GM12878 (cell line): ENCODE measurements at regions of chr3 and their contacts with region 1.

Region 1: DNA sequence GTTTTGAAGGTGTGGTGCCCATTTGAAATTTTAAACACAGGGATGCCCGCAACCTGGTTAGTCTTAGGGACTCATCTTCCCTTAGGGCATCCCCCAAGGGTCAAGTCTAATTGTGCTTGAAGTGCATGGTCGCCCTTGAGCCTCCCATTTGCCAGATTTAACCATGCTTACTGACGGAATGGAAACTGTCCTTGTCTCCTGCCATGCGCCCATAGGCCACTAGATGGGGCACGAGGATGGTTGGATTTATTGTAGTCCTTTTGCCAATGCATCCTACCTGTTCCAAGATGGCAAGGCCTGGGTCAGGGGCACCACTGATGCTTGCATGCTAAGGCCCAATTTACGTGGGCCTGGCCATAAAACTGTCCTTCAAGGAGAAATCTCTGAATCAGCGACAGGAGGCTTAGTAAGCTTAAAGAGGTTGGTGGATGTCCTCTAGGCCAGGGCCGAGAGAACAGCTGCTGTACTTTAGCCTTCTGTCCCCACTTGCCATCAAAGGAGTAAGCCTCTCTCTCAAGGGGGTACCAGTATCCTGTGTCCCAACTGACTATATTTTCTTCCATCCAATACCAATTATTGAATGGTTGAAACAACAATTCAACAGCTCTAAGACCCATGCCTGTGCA is 355.4 kb downstream of the OTOL1 start:
- DNase-seq: peak; percentile 8
- ATAC-seq: peak; percentile 90
- H3K4me3 ChIP-seq: no peak overlapping the region
- H3K27ac ChIP-seq: no peak overlapping the region
- H3K4me1 ChIP-seq: no peaks in the 10 kb centered on the region
- H3K27me3 ChIP-seq: no peaks in the 10 kb centered on the region
- CTCF ChIP-seq: peak; percentile 79 to 92 (median 81)
- EP300 ChIP-seq: no peak
- POLR2A ChIP-seq: no peak
- RAD21 ChIP-seq: peak; percentile 81

Region 2: GRCh38 chr3:161508863-161509477 is 343.1 kb before region 1 on chr3:
- CTCF ChIA-PET with region 1: interaction called, 3 read pairs
- POLR2A ChIA-PET with region 1: no interaction called
- RAD21 ChIA-PET with region 1: no interaction called
- SMC1A ChIA-PET with region 1: no interaction called
- in situ Hi-C with region 1: no loop called
- intact Hi-C with region 1: loop called (anchors 5 kb)
- DNase-seq: no peak
- ATAC-seq: peak; percentile 89
- H3K4me3 ChIP-seq: no peak overlapping the region
- H3K27ac ChIP-seq: no peak overlapping the region
- H3K4me1 ChIP-seq: no peaks in the 10 kb centered on the region
- H3K27me3 ChIP-seq: no peaks in the 10 kb centered on the region
- CTCF ChIP-seq: peak; percentile 27 to 52 (median 33); a peak in 4 of 6 replicates
- EP300 ChIP-seq: no peak
- POLR2A ChIP-seq: no peak
- RAD21 ChIP-seq: peak; percentile 42

Region 3: GRCh38 chr3:161863775-161864174 is 11.7 kb after region 1 on chr3:
- CTCF ChIA-PET with region 1: interaction called, 12 read pairs
- POLR2A ChIA-PET with region 1: no interaction called
- RAD21 ChIA-PET with region 1: no interaction called
- SMC1A ChIA-PET with region 1: interaction called, 6 read pairs
- in situ Hi-C with region 1: no loop called
- intact Hi-C with region 1: no loop called
- DNase-seq: no peak
- ATAC-seq: no peak
- H3K4me3 ChIP-seq: no peak overlapping the region
- H3K27ac ChIP-seq: no peak overlapping the region
- H3K4me1 ChIP-seq: no peaks in the 10 kb centered on the region
- H3K27me3 ChIP-seq: no peaks in the 10 kb centered on the region
- CTCF ChIP-seq: no peak
- EP300 ChIP-seq: no peak
- POLR2A ChIP-seq: no peak
- RAD21 ChIP-seq: no peak

Region 4: GRCh38 chr3:162096874-162097273 is 244.8 kb after region 1 on chr3:
- CTCF ChIA-PET with region 1: no interaction called
- POLR2A ChIA-PET with region 1: no interaction called
- RAD21 ChIA-PET with region 1: no interaction called
- SMC1A ChIA-PET with region 1: no interaction called
- in situ Hi-C with region 1: no loop called
- intact Hi-C with region 1: no loop called
- DNase-seq: no peak
- ATAC-seq: no peak
- H3K4me3 ChIP-seq: no peak overlapping the region
- H3K27ac ChIP-seq: no peak overlapping the region
- H3K4me1 ChIP-seq: no peaks in the 10 kb centered on the region
- H3K27me3 ChIP-seq: no peaks in the 10 kb centered on the region
- CTCF ChIP-seq: no peak
- EP300 ChIP-seq: no peak
- POLR2A ChIP-seq: no peak
- RAD21 ChIP-seq: no peak

Region 5: DNA sequence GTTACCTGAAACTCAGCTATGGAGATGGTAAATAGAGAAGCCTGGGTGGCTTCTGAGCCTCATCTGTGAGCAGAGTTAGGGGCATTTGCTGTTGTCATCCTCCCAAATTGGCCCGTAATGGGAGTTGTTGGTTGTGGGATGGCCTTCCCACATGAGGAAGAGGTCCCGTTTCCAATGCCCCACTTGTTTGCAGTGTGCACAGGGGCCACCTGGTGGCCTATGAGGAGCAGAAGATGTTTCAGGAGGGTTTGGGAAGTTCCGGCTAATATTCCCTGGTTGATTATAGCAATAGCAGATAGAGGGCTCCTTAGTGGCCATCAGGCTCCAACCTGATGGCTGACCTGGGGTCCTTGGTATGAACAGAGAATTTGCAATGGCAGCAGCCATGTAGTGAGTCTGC is 1191.0 kb after region 1 on chr3:
- CTCF ChIA-PET with region 1: interaction called, 3 read pairs
- POLR2A ChIA-PET with region 1: no interaction called
- RAD21 ChIA-PET with region 1: no interaction called
- SMC1A ChIA-PET with region 1: no interaction called
- in situ Hi-C with region 1: no loop called
- intact Hi-C with region 1: loop called (anchors 10 kb)
- DNase-seq: no peak
- ATAC-seq: no peak
- H3K4me3 ChIP-seq: no peak overlapping the region
- H3K27ac ChIP-seq: no peak overlapping the region
- H3K4me1 ChIP-seq: no peaks in the 10 kb centered on the region
- H3K27me3 ChIP-seq: no peaks in the 10 kb centered on the region
- CTCF ChIP-seq: peak in 1 of 3 experiments; percentile 10; a peak in 2 of 6 replicates
- EP300 ChIP-seq: no peak
- POLR2A ChIP-seq: no peak
- RAD21 ChIP-seq: no peak

Region 6: GRCh38 chr3:163490119-163490518 is 1638.1 kb after region 1 on chr3:
- CTCF ChIA-PET with region 1: no interaction called
- POLR2A ChIA-PET with region 1: no interaction called
- RAD21 ChIA-PET with region 1: no interaction called
- SMC1A ChIA-PET with region 1: no interaction called
- in situ Hi-C with region 1: loop called (anchors 25 kb)
- intact Hi-C with region 1: loop called (anchors 10 kb)
- DNase-seq: no peak
- ATAC-seq: peak; percentile 100
- H3K4me3 ChIP-seq: no peak overlapping the region
- H3K27ac ChIP-seq: no peak overlapping the region
- H3K4me1 ChIP-seq: no peaks in the 10 kb centered on the region
- H3K27me3 ChIP-seq: no peaks in the 10 kb centered on the region
- CTCF ChIP-seq: peak; percentile 53 to 82 (median 78)
- EP300 ChIP-seq: no peak
- POLR2A ChIP-seq: no peak
- RAD21 ChIP-seq: peak; percentile 75